ENCODE measurements at regions of chr5 and their contacts with region 1.

Region 1: GRCh38 chr5:88680253-88681132 is 202.5 kb downstream of the MEF2C start:
- DNase-seq: peak; percentile 81
- ATAC-seq: peak; percentile 64
- H3K4me3 ChIP-seq: peak overlapping the region in 4 of 5 experiments; percentile 18 to 49 (median 32)
- H3K4me3 Mint-ChIP-seq: peak overlapping the region; percentile 16
- H3K27ac ChIP-seq: no peak overlapping the region
- H3K27ac Mint-ChIP-seq: no peak overlapping the region
- H3K4me1 ChIP-seq: peaks cover 25 to 56% of the 10 kb centered on the region in 2 donors
- H3K4me1 Mint-ChIP-seq: peaks cover 19% of the 10 kb centered on the region
- H3K27me3 ChIP-seq: peaks cover 10 to 97% (median 82%) of the 10 kb centered on the region in 4 experiments
- H3K27me3 Mint-ChIP-seq: peaks cover 66% of the 10 kb centered on the region
- CTCF ChIP-seq: peak; percentile 83

Region 2: DNA sequence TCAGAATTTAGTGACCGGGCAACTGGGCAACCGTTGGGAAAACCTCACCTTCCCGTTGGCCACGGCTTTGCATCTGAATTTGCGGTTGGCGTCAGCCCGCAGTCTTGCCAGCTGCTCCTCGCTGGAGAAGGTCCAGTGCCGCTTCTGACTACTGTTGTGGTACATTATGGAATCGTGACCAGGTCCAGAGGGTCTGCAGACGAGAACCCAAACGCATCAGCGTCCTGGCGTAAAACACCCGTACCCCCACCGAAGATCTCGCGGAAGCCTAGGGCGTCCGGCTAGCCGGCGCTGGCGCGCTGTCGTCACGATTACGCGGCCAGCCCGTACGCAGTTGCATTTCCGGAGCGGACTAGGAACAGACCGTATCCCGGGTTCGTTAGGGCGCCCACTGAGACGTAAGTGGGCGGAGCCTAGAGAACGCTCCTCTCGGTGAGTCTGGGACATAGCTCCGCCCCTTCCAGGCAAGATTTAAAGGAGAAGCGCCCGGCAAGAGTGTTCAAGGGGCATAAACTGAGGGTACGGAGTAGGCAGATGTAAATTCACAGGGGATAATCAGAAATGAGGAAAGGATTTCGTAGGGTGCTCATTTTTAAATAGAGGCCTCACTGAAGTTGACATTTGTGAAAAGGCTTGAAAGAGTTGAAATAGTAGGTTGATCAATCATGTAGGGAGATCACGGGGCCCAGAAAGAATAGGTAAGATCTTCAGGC is 1267.7 kb before region 1 on chr5 and contains the start of gene CCNH:
- CTCF ChIA-PET with region 1: no interaction called
- POLR2A ChIA-PET with region 1: no interaction called
- intact Hi-C with region 1: loop called (anchors 10 kb)
- DNase-seq: peak; percentile 98
- ATAC-seq: peak; percentile 99
- H3K4me3 ChIP-seq: peak within 1 kb of the TSS; percentile 76 to 100 (median 84)
- H3K4me3 Mint-ChIP-seq: peak within 1 kb of the TSS; percentile 93
- H3K27ac ChIP-seq: peak within 1 kb of the TSS; percentile 89 to 96
- H3K27ac Mint-ChIP-seq: peak within 1 kb of the TSS; percentile 93
- H3K4me1 ChIP-seq: peaks cover 13 to 20% of the 10 kb centered on the region in 2 donors
- H3K4me1 Mint-ChIP-seq: peaks cover 30% of the 10 kb centered on the region
- H3K27me3 ChIP-seq: no peaks in the 10 kb centered on the region
- H3K27me3 Mint-ChIP-seq: no peaks in the 10 kb centered on the region
- CTCF ChIP-seq: no peak
- total RNA-seq, gene CCNH: 120 and 137 TPM in 2 replicates

Region 3: GRCh38 chr5:87780831-87781760 is 899.4 kb before region 1 on chr5:
- CTCF ChIA-PET with region 1: interaction called, 36 read pairs
- POLR2A ChIA-PET with region 1: no interaction called
- intact Hi-C with region 1: loop called (anchors 1 kb)
- DNase-seq: peak; percentile 82
- ATAC-seq: peak; percentile 98
- H3K4me3 ChIP-seq: no peak overlapping the region
- H3K4me3 Mint-ChIP-seq: no peak overlapping the region
- H3K27ac ChIP-seq: no peak overlapping the region
- H3K27ac Mint-ChIP-seq: no peak overlapping the region
- H3K4me1 ChIP-seq: peaks cover 0 to 3% of the 10 kb centered on the region in 2 donors
- H3K4me1 Mint-ChIP-seq: peaks cover 3% of the 10 kb centered on the region
- H3K27me3 ChIP-seq: peaks cover 0 to 11% (median 3%) of the 10 kb centered on the region in 4 experiments
- H3K27me3 Mint-ChIP-seq: peaks cover 17% of the 10 kb centered on the region
- CTCF ChIP-seq: peak; percentile 98

Region 4: GRCh38 chr5:88279584-88279983 is 400.9 kb before region 1 on chr5:
- CTCF ChIA-PET with region 1: no interaction called
- POLR2A ChIA-PET with region 1: no interaction called
- intact Hi-C with region 1: loop called (anchors 10 kb)
- DNase-seq: no peak
- ATAC-seq: no peak
- H3K4me3 ChIP-seq: no peak overlapping the region
- H3K4me3 Mint-ChIP-seq: no peak overlapping the region
- H3K27ac ChIP-seq: no peak overlapping the region
- H3K27ac Mint-ChIP-seq: no peak overlapping the region
- H3K4me1 ChIP-seq: no peaks in the 10 kb centered on the region
- H3K4me1 Mint-ChIP-seq: no peaks in the 10 kb centered on the region
- H3K27me3 ChIP-seq: no peaks in the 10 kb centered on the region
- H3K27me3 Mint-ChIP-seq: no peaks in the 10 kb centered on the region
- CTCF ChIP-seq: no peak

Region 5: GRCh38 chr5:88660947-88661805 is 19.3 kb before region 1 on chr5:
- CTCF ChIA-PET with region 1: interaction called, 10 read pairs
- POLR2A ChIA-PET with region 1: no interaction called
- intact Hi-C with region 1: loop called (anchors 2 kb)
- DNase-seq: peak; percentile 51
- ATAC-seq: peak; percentile 31
- H3K4me3 ChIP-seq: peak overlapping the region in 3 of 5 experiments; percentile 23 to 35 (median 26)
- H3K4me3 Mint-ChIP-seq: peak overlapping the region; percentile 80
- H3K27ac ChIP-seq: no peak overlapping the region
- H3K27ac Mint-ChIP-seq: peak overlapping the region; percentile 38
- H3K4me1 ChIP-seq: peaks cover 24 to 30% of the 10 kb centered on the region in 2 donors
- H3K4me1 Mint-ChIP-seq: peaks cover 21% of the 10 kb centered on the region
- H3K27me3 ChIP-seq: peaks cover 8 to 81% (median 63%) of the 10 kb centered on the region in 4 experiments
- H3K27me3 Mint-ChIP-seq: peaks cover 79% of the 10 kb centered on the region
- CTCF ChIP-seq: no peak

Region 6: DNA sequence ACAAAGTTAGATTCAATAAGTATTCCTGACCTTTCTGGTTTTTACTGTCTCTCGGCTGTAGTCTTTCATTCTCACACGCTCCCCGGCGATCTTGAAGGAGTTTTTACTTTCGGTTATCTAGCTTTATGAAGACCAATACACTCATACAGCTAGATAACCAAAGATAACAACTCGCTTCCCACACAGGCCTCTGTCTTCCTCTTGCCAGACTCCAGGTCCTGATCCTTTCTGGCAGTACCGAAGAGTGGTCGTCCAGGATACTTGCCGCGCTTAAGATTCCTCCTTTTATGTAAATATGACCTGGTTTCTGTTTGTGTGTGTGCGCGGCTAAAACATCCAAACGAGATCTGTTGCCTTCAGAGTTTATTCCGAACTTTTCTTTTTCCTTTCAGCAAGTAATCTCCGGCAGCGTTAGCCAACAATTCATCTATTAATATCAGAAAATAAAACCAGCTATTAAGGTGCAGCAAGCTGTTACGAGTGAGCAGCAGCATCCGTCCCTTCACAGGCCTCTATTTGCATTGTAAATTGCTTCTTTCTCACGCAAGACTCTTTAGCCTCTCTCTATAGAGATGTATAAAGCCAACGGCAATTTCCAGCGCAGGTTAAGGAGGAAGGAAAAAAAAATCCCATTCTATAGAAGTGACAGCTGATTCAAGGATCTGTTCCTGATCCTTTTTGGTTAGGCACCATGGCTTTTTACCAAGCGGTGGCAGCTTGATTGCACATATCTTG is 13.6 kb before region 1 on chr5:
- CTCF ChIA-PET with region 1: interaction called, 10 read pairs
- POLR2A ChIA-PET with region 1: interaction called, 5 read pairs
- intact Hi-C with region 1: loop called (anchors 1 kb)
- DNase-seq: peak; percentile 64
- ATAC-seq: peak; percentile 54
- H3K4me3 ChIP-seq: peak overlapping the region; percentile 41 to 69 (median 56)
- H3K4me3 Mint-ChIP-seq: peak overlapping the region; percentile 89
- H3K27ac ChIP-seq: no peak overlapping the region
- H3K27ac Mint-ChIP-seq: peak overlapping the region; percentile 0
- H3K4me1 ChIP-seq: peaks cover 21 to 39% of the 10 kb centered on the region in 2 donors
- H3K4me1 Mint-ChIP-seq: peaks cover 26% of the 10 kb centered on the region
- H3K27me3 ChIP-seq: peaks cover 6 to 96% (median 77%) of the 10 kb centered on the region in 4 experiments
- H3K27me3 Mint-ChIP-seq: peaks cover 90% of the 10 kb centered on the region
- CTCF ChIP-seq: no peak

Region 7: GRCh38 chr5:88690409-88691229 is 10.1 kb after region 1 on chr5:
- CTCF ChIA-PET with region 1: interaction called, 63 read pairs
- POLR2A ChIA-PET with region 1: no interaction called
- intact Hi-C with region 1: loop called (anchors 2 kb)
- DNase-seq: peak; percentile 86
- ATAC-seq: peak; percentile 94
- H3K4me3 ChIP-seq: peak overlapping the region in 3 of 5 experiments; percentile 22 to 43 (median 27)
- H3K4me3 Mint-ChIP-seq: peak overlapping the region; percentile 90
- H3K27ac ChIP-seq: no peak overlapping the region
- H3K27ac Mint-ChIP-seq: peak overlapping the region; percentile 93
- H3K4me1 ChIP-seq: peaks cover 46 to 48% of the 10 kb centered on the region in 2 donors
- H3K4me1 Mint-ChIP-seq: peaks cover 31% of the 10 kb centered on the region
- H3K27me3 ChIP-seq: peaks cover 3 to 99% (median 86%) of the 10 kb centered on the region in 4 experiments
- H3K27me3 Mint-ChIP-seq: peaks cover 83% of the 10 kb centered on the region
- CTCF ChIP-seq: peak; percentile 97

Region 8: DNA sequence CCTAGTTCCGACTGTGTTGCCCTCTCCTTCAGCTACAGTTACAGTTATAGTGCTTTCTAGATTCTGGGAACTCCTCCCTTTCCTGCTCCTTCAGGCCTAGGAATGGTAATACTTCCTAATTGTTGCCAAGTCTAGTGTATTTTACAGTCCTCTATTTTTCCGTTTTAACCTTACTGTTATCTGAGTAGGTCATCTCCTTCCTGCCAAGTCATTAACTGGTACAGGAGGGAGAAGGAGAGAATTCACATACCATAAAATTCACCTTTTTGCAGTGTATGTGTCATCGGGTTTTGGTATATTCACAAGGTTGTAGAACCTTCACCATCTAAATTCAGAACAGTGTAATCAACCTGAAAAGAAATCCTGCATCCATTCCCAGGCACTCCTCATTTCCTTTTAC is 537.9 kb after region 1 on chr5:
- CTCF ChIA-PET with region 1: no interaction called
- POLR2A ChIA-PET with region 1: no interaction called
- intact Hi-C with region 1: no loop called
- DNase-seq: no peak
- ATAC-seq: no peak
- H3K4me3 ChIP-seq: no peak overlapping the region
- H3K4me3 Mint-ChIP-seq: no peak overlapping the region
- H3K27ac ChIP-seq: no peak overlapping the region
- H3K27ac Mint-ChIP-seq: no peak overlapping the region
- H3K4me1 ChIP-seq: no peaks in the 10 kb centered on the region
- H3K4me1 Mint-ChIP-seq: no peaks in the 10 kb centered on the region
- H3K27me3 ChIP-seq: no peaks in the 10 kb centered on the region
- H3K27me3 Mint-ChIP-seq: no peaks in the 10 kb centered on the region
- CTCF ChIP-seq: no peak